ENCODE measurements at regions of chr10 and their contacts with region 1.

Region 1: GRCh38 chr10:79068562-79069324 is at the start of gene ZMIZ1:
- DNase-seq: peak; percentile 87 to 93
- H3K4me3 ChIP-seq: peak within 1 kb of the TSS; percentile 85
- H3K27ac ChIP-seq: peak within 1 kb of the TSS; percentile 33
- H3K4me1 ChIP-seq: peaks cover 37% of the 10 kb centered on the region
- H3K27me3 ChIP-seq: no peaks in the 10 kb centered on the region
- CTCF ChIP-seq: no peak; the same call in 1 of the 2 replicates
- total RNA-seq, gene ZMIZ1: 47.6 and 48.5 TPM in 2 replicates

Region 2: DNA sequence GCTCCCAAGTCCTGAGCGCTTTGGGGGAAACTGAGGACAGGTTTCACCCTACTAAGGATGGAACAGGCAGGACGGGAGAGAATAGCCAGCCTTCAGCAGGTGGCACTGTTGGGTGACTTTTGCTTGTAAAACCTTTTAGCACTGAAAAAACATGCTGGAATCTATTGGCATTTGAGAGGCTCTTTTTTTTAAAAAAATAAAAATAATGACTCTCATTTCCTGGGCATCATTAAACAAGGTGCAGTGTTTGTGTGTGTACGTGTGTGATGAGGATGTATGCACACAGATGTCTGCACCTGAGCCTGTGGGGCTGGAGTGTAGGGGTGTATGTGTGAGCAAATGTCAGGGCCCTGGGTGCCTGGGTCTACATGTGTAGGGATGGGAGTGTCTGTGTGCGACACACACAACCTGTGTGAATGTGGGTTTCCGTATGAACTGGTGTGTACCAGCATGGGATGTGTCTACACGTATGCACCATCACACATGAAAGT is 857.1 kb before region 1 on chr10:
- CTCF ChIA-PET with region 1: no interaction called
- POLR2A ChIA-PET with region 1: no interaction called
- intact Hi-C with region 1: loop called (anchors 10 kb)
- DNase-seq: peak in 1 of 2 experiments; percentile 41
- H3K4me3 ChIP-seq: no peak overlapping the region
- H3K27ac ChIP-seq: no peak overlapping the region
- H3K4me1 ChIP-seq: no peaks in the 10 kb centered on the region
- H3K27me3 ChIP-seq: peaks cover 32% of the 10 kb centered on the region
- CTCF ChIP-seq: peak; percentile 84

Region 3: DNA sequence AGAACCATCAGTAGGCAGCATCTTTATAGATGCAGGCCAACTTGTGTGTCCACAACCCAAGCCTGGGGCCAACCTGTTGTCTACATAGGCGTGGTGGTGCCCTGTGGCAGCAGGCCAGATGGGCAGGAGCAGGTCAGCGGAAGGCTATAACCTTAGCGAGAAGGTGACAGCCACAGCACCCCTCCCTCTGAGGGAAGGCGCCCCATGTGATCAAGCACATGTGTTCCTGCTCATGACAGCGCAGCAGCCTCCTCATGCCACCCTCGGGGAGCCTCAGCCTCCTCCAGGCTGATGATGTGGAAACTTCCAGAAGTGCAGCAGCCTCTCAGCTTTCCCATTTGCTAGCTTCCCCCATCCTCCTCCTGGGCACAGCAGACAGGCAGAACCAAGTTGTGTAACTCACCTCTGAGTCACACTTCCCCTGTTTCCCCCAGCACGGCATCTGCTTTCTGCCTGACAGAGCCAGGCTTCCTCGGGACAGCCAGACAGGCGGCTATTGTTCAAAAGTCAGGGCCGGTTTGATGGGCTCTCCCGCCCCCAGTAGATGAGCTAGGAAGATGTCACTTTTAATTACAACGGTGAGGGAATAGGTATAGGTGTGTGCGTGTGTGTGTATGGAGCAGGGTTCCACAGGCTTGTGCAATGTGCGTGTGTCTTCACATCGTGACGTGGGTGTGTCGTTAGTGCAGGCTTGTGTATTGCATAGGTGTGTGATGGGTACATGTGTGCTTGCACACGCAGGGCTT is 312.0 kb before region 1 on chr10:
- CTCF ChIA-PET with region 1: interaction called, 9 read pairs
- POLR2A ChIA-PET with region 1: interaction called, 3 read pairs
- intact Hi-C with region 1: loop called (anchors 2 kb)
- DNase-seq: peak; percentile 86 to 96
- H3K4me3 ChIP-seq: 0 out of 2 replicates have a peak overlapping the region, but pooled peaks have one; percentile 3
- H3K27ac ChIP-seq: peak overlapping the region; percentile 41
- H3K4me1 ChIP-seq: peaks cover 32% of the 10 kb centered on the region
- H3K27me3 ChIP-seq: no peaks in the 10 kb centered on the region
- CTCF ChIP-seq: no peak

Region 4: DNA sequence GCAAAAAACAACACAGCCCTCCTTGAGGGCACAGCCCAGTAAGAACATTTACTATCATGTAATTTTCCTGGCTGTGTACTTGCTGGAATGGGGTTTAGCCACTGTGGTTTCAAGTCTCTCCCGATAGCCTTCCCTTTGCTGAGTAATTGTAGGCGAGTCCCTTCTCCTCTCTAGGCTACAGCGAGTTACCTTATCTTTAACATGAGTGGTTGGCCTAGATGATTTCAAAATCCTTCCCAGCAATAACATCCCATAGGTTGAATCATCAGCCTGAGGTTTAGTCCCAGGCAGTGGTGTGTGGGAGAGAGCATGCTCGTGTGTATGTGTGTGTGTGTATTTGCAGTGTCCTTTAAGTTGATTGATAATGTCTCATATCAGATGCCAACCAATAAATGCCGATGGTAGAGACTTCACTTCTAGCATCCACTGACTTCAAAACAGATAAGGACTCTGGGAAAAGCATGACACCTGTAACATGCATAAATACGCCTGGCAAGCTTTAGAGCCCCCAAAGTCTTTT is 142.9 kb before region 1 on chr10:
- CTCF ChIA-PET with region 1: interaction called, 11 read pairs
- POLR2A ChIA-PET with region 1: no interaction called
- intact Hi-C with region 1: loop called (anchors 2 kb)
- DNase-seq: peak; percentile 56 to 97
- H3K4me3 ChIP-seq: no peak overlapping the region
- H3K27ac ChIP-seq: peak overlapping the region; percentile 88
- H3K4me1 ChIP-seq: peaks cover 79% of the 10 kb centered on the region
- H3K27me3 ChIP-seq: no peaks in the 10 kb centered on the region
- CTCF ChIP-seq: no peak

Region 5: DNA sequence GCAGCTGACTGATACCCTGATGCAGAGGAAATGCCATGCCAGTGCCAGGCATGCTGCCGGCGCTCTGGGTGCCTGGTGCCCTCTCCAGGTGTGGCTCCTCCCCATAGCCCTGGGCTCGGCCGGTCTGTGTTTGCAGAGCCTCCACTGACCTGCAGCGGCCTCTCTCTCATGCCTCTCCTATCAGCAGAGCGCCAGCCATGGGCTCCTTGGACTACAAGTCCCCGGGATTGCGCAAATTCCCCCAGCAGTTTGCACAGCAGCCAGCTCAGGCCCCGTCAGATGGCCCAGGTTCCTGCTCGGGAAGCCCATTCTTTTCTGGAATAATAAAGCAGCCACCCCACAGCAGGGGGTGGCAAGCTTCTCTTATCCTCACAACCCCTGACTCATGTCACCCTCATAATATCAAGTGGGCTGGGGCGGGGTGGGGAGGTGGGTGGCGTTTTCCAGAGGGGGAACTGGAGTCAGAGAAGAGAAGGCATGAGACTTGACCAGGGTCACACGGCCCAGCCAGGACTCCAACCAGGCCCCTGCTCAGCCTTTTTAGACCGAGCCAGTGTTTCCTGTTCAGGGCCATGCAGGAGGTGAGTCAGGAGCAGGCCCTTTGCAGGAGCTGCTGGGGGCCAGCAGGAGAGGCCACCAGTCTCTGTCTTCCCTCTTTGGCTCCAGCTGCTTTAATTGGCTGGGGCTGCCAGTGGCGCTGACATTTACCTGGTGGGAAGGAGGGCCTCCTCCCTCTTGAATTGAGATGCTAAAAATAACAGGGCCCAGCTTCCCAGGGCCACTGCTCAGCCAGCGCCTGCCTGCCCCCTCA is 58.6 kb after region 1 on chr10:
- CTCF ChIA-PET with region 1: no interaction called
- POLR2A ChIA-PET with region 1: no interaction called
- intact Hi-C with region 1: loop called (anchors 1 kb)
- DNase-seq: peak; percentile 91 to 95
- H3K4me3 ChIP-seq: no peak overlapping the region
- H3K27ac ChIP-seq: peak overlapping the region; percentile 44
- H3K4me1 ChIP-seq: peaks cover 61% of the 10 kb centered on the region
- H3K27me3 ChIP-seq: no peaks in the 10 kb centered on the region
- CTCF ChIP-seq: no peak; the same call in 1 of the 2 replicates

Region 6: DNA sequence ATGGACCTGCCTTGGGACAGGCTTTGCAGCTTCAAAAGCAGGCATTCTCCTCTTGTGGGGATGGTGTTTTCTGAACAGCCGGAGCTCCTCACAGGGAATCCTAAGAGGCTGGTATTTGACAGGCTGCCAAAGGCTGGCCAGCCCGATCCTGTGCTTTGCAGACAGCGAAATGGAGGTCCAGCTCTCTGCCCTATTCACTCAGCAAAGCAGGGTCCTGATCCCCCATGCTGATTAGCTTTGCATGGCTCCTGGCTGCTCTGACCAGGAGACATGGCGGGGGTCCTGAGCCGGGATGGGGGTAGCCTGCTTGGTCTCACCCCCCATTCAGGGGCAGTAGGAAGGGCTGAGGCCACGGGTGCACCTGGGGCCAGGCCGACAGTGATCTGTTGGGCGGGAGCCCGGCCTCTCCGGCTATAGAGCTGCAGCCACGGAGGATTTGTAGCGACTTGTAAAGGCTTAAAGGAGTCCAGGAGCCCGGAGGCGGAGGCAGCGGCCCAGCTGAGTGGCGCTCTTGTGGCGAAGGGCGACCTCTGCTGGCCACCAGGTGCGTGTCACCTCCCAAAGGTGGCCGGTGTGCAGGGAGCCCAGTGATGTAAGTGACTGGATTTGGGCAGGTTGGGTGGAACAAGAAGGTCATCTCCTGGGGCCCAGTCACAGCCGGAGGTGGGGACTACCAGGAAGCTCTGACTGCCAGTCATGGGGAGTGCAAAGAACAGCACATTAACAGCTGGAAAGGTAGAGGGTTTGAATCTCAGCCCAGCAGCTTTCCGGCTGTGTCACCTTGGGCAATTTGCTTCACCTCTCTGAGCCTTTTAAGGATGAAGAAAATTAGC is 126.6 kb after region 1 on chr10:
- CTCF ChIA-PET with region 1: interaction called, 5 read pairs
- POLR2A ChIA-PET with region 1: interaction called, 7 read pairs
- intact Hi-C with region 1: loop called (anchors 1 kb)
- DNase-seq: peak; percentile 76 to 89
- H3K4me3 ChIP-seq: no peak overlapping the region
- H3K27ac ChIP-seq: no peak overlapping the region
- H3K4me1 ChIP-seq: peaks cover 33% of the 10 kb centered on the region
- H3K27me3 ChIP-seq: no peaks in the 10 kb centered on the region
- CTCF ChIP-seq: peak; percentile 99

Region 7: DNA sequence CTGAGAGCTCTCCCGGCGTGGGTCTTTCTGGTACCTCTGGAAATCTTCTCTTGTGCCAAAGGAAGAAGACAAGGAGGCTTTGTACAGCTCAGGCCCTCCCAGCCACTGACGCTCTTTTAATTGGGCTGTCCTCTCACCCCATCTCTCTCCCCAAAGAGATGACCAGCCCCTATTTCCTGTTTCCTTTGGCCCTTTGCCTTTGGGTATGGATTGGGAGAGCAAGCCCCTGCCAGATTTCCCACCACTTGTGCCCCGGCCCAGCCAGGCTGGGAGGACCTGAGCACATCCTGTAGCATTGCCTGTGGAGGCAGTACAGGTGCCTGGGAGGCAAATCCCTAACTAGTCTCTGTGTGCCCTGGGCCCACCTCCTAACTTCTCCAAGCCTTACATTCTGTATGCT is 1058.1 kb after region 1 on chr10:
- CTCF ChIA-PET with region 1: no interaction called
- POLR2A ChIA-PET with region 1: no interaction called
- intact Hi-C with region 1: no loop called
- DNase-seq: no peak
- H3K4me3 ChIP-seq: no peak overlapping the region
- H3K27ac ChIP-seq: no peak overlapping the region
- H3K4me1 ChIP-seq: peaks cover 11% of the 10 kb centered on the region; the same call in 1 of the 2 replicates
- H3K27me3 ChIP-seq: no peaks in the 10 kb centered on the region
- CTCF ChIP-seq: no peak

Measured in PC-9 (cell line).